ENCODE measurements at regions of chr20 and their contacts with region 1.

Region 1: GRCh38 chr20:49219089-49219923 is at the start of gene DDX27:
- DNase-seq: peak; percentile 98
- ATAC-seq: peak; percentile 90
- H3K4me3 Mint-ChIP-seq: peak within 1 kb of the TSS; percentile 96
- H3K27ac Mint-ChIP-seq: peak within 1 kb of the TSS; percentile 99
- H3K4me1 Mint-ChIP-seq: peaks cover 29% of the 10 kb centered on the region
- H3K27me3 Mint-ChIP-seq: no peaks in the 10 kb centered on the region
- total RNA-seq, gene DDX27: 48.5 to 54.0 TPM

Region 2: GRCh38 chr20:49046087-49046900 is 173.0 kb before region 1 on chr20 and contains the start of gene CSE1L:
- CTCF ChIA-PET with region 1: interaction called, 4 read pairs
- POLR2A ChIA-PET with region 1: interaction called, 3 read pairs
- intact Hi-C with region 1: loop called (anchors 1 kb)
- DNase-seq: peak; percentile 97
- ATAC-seq: peak; percentile 92
- H3K4me3 Mint-ChIP-seq: peak within 1 kb of the TSS; percentile 97
- H3K27ac Mint-ChIP-seq: peak within 1 kb of the TSS; percentile 99
- H3K4me1 Mint-ChIP-seq: peaks cover 30% of the 10 kb centered on the region
- H3K27me3 Mint-ChIP-seq: no peaks in the 10 kb centered on the region
- total RNA-seq, gene CSE1L: 119 to 126 TPM

Region 3: GRCh38 chr20:49161428-49162152 is 57.7 kb before region 1 on chr20:
- CTCF ChIA-PET with region 1: interaction called, 28 read pairs
- POLR2A ChIA-PET with region 1: interaction called, 4 read pairs
- intact Hi-C with region 1: loop called (anchors 1 to 2 kb)
- DNase-seq: no peak
- ATAC-seq: no peak
- H3K4me3 Mint-ChIP-seq: no peak overlapping the region
- H3K27ac Mint-ChIP-seq: peak overlapping the region; percentile 10
- H3K4me1 Mint-ChIP-seq: peaks cover 67% of the 10 kb centered on the region
- H3K27me3 Mint-ChIP-seq: no peaks in the 10 kb centered on the region

Region 4: GRCh38 chr20:49186535-49187329 is 32.6 kb before region 1 on chr20:
- CTCF ChIA-PET with region 1: interaction called, 101 read pairs
- POLR2A ChIA-PET with region 1: interaction called, 4 read pairs
- intact Hi-C with region 1: loop called (anchors 1 kb)
- DNase-seq: peak; percentile 85
- ATAC-seq: peak; percentile 49
- H3K4me3 Mint-ChIP-seq: peak overlapping the region; percentile 96
- H3K27ac Mint-ChIP-seq: peak overlapping the region; percentile 89
- H3K4me1 Mint-ChIP-seq: peaks cover 51% of the 10 kb centered on the region
- H3K27me3 Mint-ChIP-seq: no peaks in the 10 kb centered on the region

Region 5: DNA sequence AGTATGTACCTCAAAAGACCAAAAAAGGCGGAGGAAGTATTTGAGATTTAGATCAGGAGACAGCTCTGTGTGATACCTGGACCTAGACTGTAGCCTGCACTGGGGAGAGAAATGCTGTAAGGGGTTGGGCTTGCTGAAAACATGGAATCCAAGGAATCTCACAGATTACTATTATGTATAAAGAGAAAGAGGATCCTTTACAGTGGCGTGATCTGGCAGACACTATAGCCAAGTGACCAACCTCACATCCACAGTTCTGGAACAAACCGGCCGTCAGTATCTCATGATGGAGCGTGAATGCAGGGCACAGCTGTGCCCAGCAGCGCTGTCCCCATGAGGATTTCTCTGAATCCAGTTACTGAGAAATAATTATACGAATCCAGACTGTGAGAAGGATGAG is 12.2 kb after region 1 on chr20:
- CTCF ChIA-PET with region 1: interaction called, 6 read pairs
- POLR2A ChIA-PET with region 1: interaction called, 10 read pairs
- intact Hi-C with region 1: no loop called
- DNase-seq: no peak
- ATAC-seq: no peak
- H3K4me3 Mint-ChIP-seq: no peak overlapping the region
- H3K27ac Mint-ChIP-seq: no peak overlapping the region
- H3K4me1 Mint-ChIP-seq: no peaks in the 10 kb centered on the region
- H3K27me3 Mint-ChIP-seq: no peaks in the 10 kb centered on the region

Measured in activated CD4-positive, alpha-beta T cell treated with anti-CD3 and anti-CD28 coated beads for 36 hours (primary cell).